Activated naive CD4-positive, alpha-beta T cell treated with anti-CD3 and anti-CD28 coated beads for 36 hours (primary cell): ENCODE measurements at regions of chr12 and their contacts with region 1.

Region 1: GRCh38 chr12:3041558-3042164 is 35.5 kb upstream of the TSPAN9 start:
- DNase-seq: peak; percentile 79
- H3K4me3 Mint-ChIP-seq: no peak overlapping the region
- H3K27ac Mint-ChIP-seq: no peak overlapping the region
- H3K4me1 Mint-ChIP-seq: no peaks in the 10 kb centered on the region
- H3K27me3 Mint-ChIP-seq: peaks cover 14% of the 10 kb centered on the region

Region 2: DNA sequence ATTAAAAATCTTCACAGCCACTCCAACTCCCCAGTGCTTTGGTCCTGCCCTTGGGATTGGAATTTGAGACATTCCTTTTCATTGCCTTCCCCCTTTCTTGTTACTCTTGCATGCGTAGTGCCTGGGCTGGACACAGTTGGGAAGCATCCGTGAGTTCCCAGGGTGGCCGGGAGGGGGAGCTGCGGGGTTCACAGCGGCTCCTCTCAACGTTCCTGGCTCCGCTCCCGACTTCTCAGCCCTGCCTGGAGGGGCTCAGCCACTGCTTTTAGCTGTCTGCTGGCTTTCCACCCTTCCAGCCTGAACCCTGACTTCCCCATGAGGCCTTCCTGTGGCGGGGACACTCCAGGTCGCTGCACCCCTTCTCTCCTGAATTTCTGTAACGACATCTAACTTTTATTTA is 188.0 kb before region 1 on chr12:
- CTCF ChIA-PET with region 1: interaction called, 6 read pairs
- intact Hi-C with region 1: loop called (anchors 1 kb)
- DNase-seq: peak; percentile 62
- H3K4me3 Mint-ChIP-seq: no peak overlapping the region
- H3K27ac Mint-ChIP-seq: no peak overlapping the region
- H3K4me1 Mint-ChIP-seq: peaks cover 2% of the 10 kb centered on the region
- H3K27me3 Mint-ChIP-seq: no peaks in the 10 kb centered on the region

Region 3: DNA sequence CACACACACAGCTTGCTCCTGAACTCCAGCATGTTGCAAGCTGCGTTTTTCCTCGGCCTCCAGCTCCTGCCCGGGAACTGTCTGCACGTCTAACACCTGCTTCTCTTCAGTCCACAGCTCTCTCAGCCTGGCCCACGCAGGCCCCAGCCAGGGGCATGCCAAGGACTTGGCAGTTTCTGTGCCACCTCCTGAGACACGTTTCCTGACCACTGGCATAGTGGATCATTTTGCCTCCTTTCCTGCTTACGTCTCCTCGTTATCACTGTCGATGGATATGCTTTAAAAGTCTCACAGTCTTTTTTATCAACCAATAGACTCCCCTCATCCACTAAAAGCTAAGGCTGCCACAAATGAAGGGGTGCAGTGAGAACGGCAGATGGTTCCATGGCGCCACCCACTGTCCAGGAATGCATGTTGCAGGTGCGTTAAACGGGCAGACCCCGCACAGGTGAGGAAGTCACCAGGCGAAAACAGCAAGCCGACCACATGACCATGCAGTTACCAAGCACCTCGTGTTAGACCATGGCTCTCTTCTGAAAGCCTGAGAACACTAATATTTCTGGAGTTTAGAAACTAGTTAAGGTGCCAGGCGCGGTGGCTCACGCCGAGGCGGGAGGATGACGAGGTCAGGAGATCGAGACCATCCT is 97.1 kb before region 1 on chr12:
- CTCF ChIA-PET with region 1: no interaction called
- intact Hi-C with region 1: loop called (anchors 5 kb)
- DNase-seq: peak; percentile 77
- H3K4me3 Mint-ChIP-seq: peak overlapping the region; percentile 36
- H3K27ac Mint-ChIP-seq: no peak overlapping the region
- H3K4me1 Mint-ChIP-seq: peaks cover 2% of the 10 kb centered on the region
- H3K27me3 Mint-ChIP-seq: peaks cover 3% of the 10 kb centered on the region

Region 4: DNA sequence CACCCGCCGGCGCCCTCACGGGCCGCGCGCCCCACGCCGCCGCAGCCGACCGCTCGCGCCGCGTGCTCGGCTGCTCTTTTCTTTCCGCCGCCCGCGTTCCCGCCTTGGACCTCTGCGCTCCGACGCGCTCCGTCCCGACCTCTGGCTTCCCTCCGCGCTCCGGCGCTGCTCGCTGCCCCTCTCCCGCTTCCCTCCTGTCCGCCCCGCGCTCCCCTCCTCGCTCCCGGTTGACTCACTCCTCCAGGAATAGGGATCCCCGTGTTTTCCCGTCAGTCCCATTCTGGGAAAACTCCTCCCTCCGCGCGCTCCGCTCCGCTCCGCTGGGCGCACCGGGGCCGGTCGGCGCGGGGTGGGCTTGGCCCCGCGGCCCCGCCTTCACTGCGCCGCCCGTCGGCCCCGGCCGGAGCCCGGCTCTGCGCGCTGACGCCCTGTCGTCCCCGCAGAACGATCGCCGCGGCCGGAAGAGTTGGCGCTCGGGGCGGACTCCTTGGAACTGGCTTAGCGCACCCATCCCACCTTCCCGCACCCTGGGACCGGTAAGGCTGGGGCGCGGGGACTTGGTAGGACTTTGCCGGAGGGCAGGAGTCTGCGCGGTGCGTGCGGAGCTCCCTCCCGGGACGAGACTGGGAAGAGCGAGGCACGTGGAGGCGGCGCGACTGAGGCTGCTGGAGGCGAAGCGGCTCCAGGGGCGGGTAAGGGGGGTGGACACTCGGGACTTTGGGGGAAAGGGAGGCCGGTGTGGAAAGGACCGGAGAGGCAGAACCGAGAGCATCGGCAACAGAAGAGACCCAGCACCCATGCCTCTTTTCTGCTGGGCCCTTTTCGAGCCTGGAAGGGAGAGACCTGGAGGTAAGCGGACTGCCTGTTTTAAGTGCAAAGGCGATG is 81.9 kb before region 1 on chr12:
- CTCF ChIA-PET with region 1: no interaction called
- intact Hi-C with region 1: loop called (anchors 5 kb)
- DNase-seq: peak; percentile 11
- H3K4me3 Mint-ChIP-seq: peak overlapping the region; percentile 67
- H3K27ac Mint-ChIP-seq: no peak overlapping the region
- H3K4me1 Mint-ChIP-seq: peaks cover 15% of the 10 kb centered on the region
- H3K27me3 Mint-ChIP-seq: peaks cover 63% of the 10 kb centered on the region

Region 5: GRCh38 chr12:3030821-3031429 is 10.7 kb before region 1 on chr12:
- CTCF ChIA-PET with region 1: no interaction called
- intact Hi-C with region 1: no loop called
- DNase-seq: no peak
- H3K4me3 Mint-ChIP-seq: no peak overlapping the region
- H3K27ac Mint-ChIP-seq: no peak overlapping the region
- H3K4me1 Mint-ChIP-seq: no peaks in the 10 kb centered on the region
- H3K27me3 Mint-ChIP-seq: no peaks in the 10 kb centered on the region

Region 6: DNA sequence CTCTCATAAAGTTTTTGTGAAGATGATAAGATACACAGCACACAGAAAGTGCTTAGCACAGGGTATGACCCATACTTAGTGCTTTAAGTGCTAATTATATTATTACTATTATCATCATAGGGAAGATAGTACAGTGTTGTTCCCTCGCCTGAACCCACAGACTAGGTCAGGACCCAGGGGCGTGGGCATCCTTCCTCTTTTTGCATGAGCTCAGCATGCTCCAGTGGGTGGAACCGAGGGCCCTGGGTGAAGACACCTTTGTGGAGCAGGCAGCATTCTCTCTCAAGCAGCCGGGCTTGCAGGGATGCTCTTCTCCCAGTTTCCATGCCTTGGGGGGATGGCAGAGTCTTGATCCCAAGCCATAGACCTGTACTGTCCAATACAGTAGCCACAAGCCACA is 676.4 kb after region 1 on chr12:
- CTCF ChIA-PET with region 1: no interaction called
- intact Hi-C with region 1: no loop called
- DNase-seq: no peak
- H3K4me3 Mint-ChIP-seq: no peak overlapping the region
- H3K27ac Mint-ChIP-seq: no peak overlapping the region
- H3K4me1 Mint-ChIP-seq: peaks cover 6% of the 10 kb centered on the region
- H3K27me3 Mint-ChIP-seq: no peaks in the 10 kb centered on the region